Cardiac septum (tissue), 1 donor: ENCODE measurements at regions of chr2 and their contacts with region 1.

Region 1: GRCh38 chr2:138787053-138787666 is 7.0 kb upstream of the NXPH2 start:
- DNase-seq: no peak

Region 2: DNA sequence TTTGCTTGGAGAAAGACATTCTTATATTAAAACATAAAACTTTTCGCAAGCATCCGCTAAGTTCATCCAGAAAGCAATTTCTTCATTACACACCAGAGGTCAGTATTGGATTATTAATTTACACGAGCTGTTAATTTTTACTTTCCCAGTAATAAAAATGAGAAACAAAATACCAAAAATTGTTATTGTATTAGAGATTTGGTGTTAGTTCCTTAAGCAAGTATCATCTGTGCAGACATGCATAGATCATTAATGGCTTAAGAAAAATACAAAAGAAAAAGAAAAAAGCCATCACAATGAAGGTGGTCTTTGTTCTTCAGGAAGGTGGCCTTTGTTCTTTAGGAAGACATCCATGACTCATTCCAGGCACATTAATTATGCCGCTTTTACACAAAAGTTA is 876.5 kb before region 1 on chr2:
- intact Hi-C with region 1: loop called (anchors 10 kb)
- DNase-seq: no peak

Region 3: GRCh38 chr2:138373993-138374408 is 413.2 kb before region 1 on chr2:
- intact Hi-C with region 1: loop called (anchors 10 kb)
- DNase-seq: no peak

Region 4: DNA sequence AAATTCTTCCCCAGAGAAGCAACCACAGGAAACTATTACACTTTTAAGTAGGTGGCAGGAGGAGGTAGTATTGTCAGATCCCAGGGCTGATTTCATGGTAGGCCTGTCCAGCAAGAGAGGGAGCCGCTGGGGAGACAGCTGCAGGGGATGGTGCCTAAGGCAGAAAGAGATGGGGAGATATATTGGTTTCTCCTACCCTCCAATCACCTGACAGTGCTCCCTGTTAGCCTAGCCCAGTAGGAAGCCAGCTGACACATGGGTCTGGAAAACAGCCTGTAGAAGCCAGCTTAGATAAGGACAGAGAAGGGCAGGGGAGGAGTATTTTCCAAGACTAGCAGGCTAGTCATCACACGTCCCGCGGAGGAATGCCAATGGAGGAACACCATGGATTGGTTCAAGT is 293.8 kb before region 1 on chr2:
- intact Hi-C with region 1: loop called (anchors 10 kb)
- DNase-seq: no peak